A673 (cell line): ENCODE measurements at regions of chr6 and their contacts with region 1.

Region 1: DNA sequence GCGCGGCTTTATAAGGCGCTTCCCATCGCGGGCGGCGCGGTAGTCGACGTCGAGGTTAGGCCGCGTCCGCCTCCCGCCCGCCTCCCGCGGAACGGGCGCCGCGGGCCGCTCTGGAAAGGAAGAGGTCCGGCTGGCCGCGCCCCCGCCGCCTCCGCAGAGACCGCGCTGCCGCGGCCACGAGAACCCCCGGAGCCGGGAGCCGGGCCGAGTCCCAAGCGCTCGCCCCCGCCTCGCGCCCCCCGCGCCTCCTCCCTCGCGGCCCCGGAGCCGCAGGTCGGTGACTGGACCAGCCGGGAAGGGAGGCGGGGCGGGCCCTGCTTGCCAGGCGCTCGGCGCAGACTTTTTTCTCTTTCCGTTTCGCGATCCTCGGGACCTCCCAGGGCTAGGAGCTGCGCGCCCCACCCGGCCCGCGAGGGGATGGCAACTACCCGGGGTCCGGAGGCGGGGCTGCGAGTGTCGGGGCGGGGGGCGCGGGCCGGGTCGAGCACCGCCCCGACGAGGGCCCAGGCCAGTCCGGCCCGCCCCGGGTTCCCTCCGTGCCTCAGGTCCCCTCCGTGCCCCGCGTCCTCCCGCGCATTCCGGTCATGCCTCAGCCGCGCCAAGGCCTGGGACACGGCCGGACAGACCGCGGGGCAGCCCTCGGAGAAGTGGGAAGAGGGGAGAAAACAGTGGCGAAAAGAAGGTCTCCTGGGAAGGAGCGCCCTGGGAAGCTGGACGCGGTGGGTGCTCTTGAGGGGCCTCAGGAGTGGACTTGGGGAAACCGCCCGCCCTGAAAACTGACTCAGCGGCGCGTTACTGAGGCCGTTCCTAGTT is 423 bp upstream of the PXDC1 start:
- DNase-seq: peak; percentile 88
- H3K4me3 ChIP-seq: peak overlapping the region; percentile 58
- H3K27ac ChIP-seq: peak overlapping the region; percentile 71
- H3K4me1 ChIP-seq: peaks cover 30% of the 10 kb centered on the region
- H3K27me3 ChIP-seq: no peaks in the 10 kb centered on the region
- CTCF ChIP-seq: peak; percentile 40

Region 2: GRCh38 chr6:3549314-3549940 is 202.5 kb before region 1 on chr6:
- CTCF ChIA-PET with region 1: no interaction called
- POLR2A ChIA-PET with region 1: no interaction called
- intact Hi-C with region 1: no loop called
- DNase-seq: no peak
- H3K4me3 ChIP-seq: no peak overlapping the region
- H3K27ac ChIP-seq: no peak overlapping the region
- H3K4me1 ChIP-seq: no peaks in the 10 kb centered on the region
- H3K27me3 ChIP-seq: no peaks in the 10 kb centered on the region
- CTCF ChIP-seq: no peak

Region 3: GRCh38 chr6:3887150-3887700 is 135.3 kb after region 1 on chr6:
- CTCF ChIA-PET with region 1: interaction called, 4 read pairs
- POLR2A ChIA-PET with region 1: no interaction called
- intact Hi-C with region 1: loop called (anchors 2 kb)
- DNase-seq: peak; percentile 23
- H3K4me3 ChIP-seq: no peak overlapping the region
- H3K27ac ChIP-seq: no peak overlapping the region
- H3K4me1 ChIP-seq: peaks cover 11% of the 10 kb centered on the region
- H3K27me3 ChIP-seq: no peaks in the 10 kb centered on the region
- CTCF ChIP-seq: peak; percentile 55